ENCODE measurements at regions of chr13 and their contacts with region 1.

Region 1: GRCh38 chr13:31022288-31022895 is 89.9 kb downstream of the TEX26 start:
- DNase-seq: no peak
- H3K4me3 Mint-ChIP-seq: no peak overlapping the region
- H3K27ac Mint-ChIP-seq: no peak overlapping the region
- H3K4me1 Mint-ChIP-seq: no peaks in the 10 kb centered on the region
- H3K27me3 Mint-ChIP-seq: peaks cover 28% of the 10 kb centered on the region
- CTCF ChIP-seq: no peak

Region 2: DNA sequence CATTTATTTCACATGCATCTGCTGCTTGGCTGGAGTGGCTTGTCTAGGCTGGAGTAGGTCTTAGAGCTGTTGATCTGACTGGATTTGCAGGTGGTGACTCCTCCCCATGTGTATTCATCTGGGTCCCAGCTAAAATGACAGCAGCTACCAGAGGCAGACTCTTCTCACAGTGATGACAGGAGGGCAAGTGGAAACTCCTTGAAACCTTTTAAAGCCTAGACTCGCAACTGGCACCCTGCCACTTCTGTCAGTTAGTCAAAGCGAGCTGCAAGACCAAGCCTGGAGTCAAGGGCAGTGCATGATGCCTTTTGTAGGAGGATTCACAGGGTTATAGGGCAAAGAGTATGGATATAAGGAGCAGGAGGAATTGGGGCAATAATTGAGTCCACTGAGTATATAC is 24.7 kb before region 1 on chr13:
- CTCF ChIA-PET with region 1: no interaction called
- POLR2A ChIA-PET with region 1: interaction called, 3 read pairs
- intact Hi-C with region 1: loop called (anchors 2 kb)
- DNase-seq: no peak
- H3K4me3 Mint-ChIP-seq: no peak overlapping the region
- H3K27ac Mint-ChIP-seq: no peak overlapping the region
- H3K4me1 Mint-ChIP-seq: no peaks in the 10 kb centered on the region
- H3K27me3 Mint-ChIP-seq: peaks cover 27% of the 10 kb centered on the region
- CTCF ChIP-seq: no peak

Measured in MCF 10A (cell line).